ENCODE measurements at regions of chr2 and their contacts with region 1.

Region 1: DNA sequence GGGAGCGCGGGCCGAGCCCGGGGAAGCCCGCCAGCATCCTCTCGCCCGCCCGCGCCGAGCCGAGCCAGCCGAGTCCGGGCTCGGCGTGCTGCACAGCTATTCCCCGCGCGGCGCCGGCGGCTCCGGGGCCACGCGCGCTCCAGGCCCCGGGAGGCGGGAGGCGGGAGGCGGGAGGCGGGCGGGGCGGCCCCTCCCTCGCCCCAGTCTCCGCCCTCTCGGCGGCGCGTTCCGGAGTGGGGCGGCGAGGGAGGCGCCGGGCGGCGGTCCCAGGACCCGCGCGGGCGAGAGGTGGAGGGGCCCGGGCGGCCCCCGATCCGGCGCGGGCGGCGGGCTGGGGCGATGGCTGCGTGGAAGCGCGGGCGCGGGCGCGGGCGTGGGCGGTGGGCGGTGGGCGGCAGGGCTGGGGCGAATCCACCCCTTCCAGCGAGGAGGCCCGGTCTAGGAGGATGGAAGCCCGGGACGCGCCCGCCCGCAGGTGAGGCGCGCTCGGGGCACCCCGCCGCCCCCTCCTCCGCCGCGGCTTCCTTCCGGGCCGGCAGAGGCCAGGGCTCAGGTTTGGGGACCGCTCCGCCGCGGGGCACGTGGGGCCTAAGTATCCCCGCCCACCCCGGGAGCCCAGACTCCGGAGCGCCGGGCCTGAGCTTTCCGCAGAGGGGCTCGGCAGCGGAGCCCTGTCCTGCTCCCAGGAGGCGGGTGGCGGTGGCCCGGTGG is at the start of gene ADCY3:
- DNase-seq: peak; percentile 62
- ATAC-seq: peak; percentile 79
- H3K4me3 Mint-ChIP-seq: peak within 1 kb of the TSS; percentile 88
- H3K27ac Mint-ChIP-seq: peak within 1 kb of the TSS; percentile 82
- H3K4me1 Mint-ChIP-seq: peaks cover 24% of the 10 kb centered on the region
- H3K27me3 Mint-ChIP-seq: no peaks in the 10 kb centered on the region
- CTCF ChIP-seq: no peak
- total RNA-seq, gene ADCY3: 99.9 and 126 TPM in 2 replicates

Region 2: DNA sequence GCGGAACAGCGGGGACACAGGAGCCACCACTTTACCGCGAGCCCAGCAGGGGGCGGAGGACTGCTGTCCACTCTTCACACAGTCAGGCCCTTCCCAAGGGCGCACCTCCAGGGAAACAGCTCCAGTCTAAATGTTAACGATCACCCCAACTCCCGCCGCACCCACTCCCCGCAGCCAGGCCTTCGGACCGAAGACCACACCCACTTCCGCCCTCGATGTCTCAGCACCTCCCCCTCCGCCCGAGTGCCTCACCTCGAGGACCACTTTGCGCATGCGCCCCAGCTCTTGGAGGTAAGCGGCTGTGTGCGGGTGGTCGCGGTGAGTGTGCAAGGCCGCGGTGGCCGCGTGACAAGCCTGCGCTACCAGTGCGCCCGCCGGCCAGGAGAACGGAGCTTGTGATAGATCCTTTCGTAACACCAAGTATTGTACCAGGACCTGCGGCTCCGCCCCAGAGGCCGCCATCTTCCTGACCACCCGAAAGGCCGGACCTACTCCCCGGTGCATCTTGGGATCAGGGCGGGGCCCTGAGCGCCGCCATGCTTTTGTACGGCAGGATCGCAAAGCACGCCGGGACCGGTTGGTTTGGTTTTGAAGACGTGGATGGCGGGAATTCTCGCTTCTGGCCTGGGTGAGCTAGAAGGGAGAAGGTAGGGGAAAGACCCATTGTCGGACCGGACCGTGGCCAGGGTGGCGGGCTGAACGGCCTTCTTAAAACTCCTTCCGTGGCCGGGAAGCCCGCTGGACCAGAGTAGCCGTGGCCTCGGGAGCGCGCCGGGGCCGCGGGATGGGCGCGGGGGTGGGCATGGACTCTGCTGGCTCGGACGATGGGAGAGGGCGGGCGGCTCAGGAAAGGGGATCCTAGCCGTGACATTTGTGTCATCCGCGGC is 127.1 kb before region 1 on chr2 and contains the starts of genes CENPO and PTRHD1:
- CTCF ChIA-PET with region 1: no interaction called
- POLR2A ChIA-PET with region 1: no interaction called
- intact Hi-C with region 1: loop called (anchors 1 kb)
- DNase-seq: peak; percentile 94
- ATAC-seq: peak; percentile 98
- H3K4me3 Mint-ChIP-seq: peak within 1 kb of the TSS; percentile 98
- H3K27ac Mint-ChIP-seq: peak within 1 kb of the TSS; percentile 100
- H3K4me1 Mint-ChIP-seq: peaks cover 18% of the 10 kb centered on the region
- H3K27me3 Mint-ChIP-seq: no peaks in the 10 kb centered on the region
- CTCF ChIP-seq: no peak
- total RNA-seq, gene CENPO: 11.2 and 13.4 TPM in 2 replicates
- total RNA-seq, gene PTRHD1: 39.6 and 41.1 TPM in 2 replicates

Region 3: GRCh38 chr2:24886691-24887304 is 33.5 kb before region 1 on chr2:
- CTCF ChIA-PET with region 1: no interaction called
- POLR2A ChIA-PET with region 1: interaction called, 3 read pairs
- intact Hi-C with region 1: loop called (anchors 2 kb)
- DNase-seq: peak; percentile 49
- ATAC-seq: peak; percentile 93
- H3K4me3 Mint-ChIP-seq: peak overlapping the region; percentile 90
- H3K27ac Mint-ChIP-seq: peak overlapping the region; percentile 97
- H3K4me1 Mint-ChIP-seq: peaks cover 61% of the 10 kb centered on the region
- H3K27me3 Mint-ChIP-seq: no peaks in the 10 kb centered on the region
- CTCF ChIP-seq: no peak

Measured in activated B cell treated with CpG ODN at 0.5 μM for 24 hours (primary cell).